ENCODE measurements at regions of chr20 and their contacts with region 1.

Region 1: GRCh38 chr20:44942264-44942973 is 17.8 kb downstream of the TOMM34 start:
- DNase-seq: no peak
- H3K4me3 ChIP-seq: no peak overlapping the region
- H3K27ac ChIP-seq: no peak overlapping the region
- H3K4me1 ChIP-seq: no peaks in the 10 kb centered on the region
- H3K27me3 ChIP-seq: no peaks in the 10 kb centered on the region
- CTCF ChIP-seq: peak; percentile 10 to 36 (median 31); a peak in 3 of 4 replicates
- EP300 ChIP-seq: no peak
- POLR2A ChIP-seq: no peak
- RAD21 ChIP-seq: no peak

Region 2: DNA sequence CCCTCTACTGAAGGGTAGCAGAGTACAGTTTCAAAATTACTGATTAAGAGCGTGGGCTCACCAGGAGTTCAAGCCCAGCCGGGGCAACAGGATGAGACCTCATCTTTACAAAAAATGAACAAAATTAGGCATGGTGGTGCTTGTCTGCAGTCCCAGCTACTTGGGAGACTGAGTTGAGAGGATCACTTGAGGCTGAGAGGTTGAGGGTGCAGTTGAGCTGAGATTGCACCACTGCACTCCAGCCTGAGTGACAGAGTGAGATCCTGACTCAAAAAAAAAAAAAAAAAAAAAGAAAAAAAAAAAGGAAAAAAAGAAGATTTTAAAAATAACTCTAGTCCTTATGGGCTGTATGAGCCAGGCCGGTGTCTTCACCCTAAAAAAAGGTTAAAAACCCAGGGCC is 13.8 kb before region 1 on chr20:
- CTCF ChIA-PET with region 1: interaction called, 8 read pairs
- POLR2A ChIA-PET with region 1: interaction called, 27 read pairs
- DNase-seq: no peak
- H3K4me3 ChIP-seq: no peak overlapping the region
- H3K27ac ChIP-seq: no peak overlapping the region
- H3K4me1 ChIP-seq: no peaks in the 10 kb centered on the region
- H3K27me3 ChIP-seq: no peaks in the 10 kb centered on the region
- CTCF ChIP-seq: no peak
- EP300 ChIP-seq: no peak
- POLR2A ChIP-seq: no peak
- RAD21 ChIP-seq: no peak

Region 3: DNA sequence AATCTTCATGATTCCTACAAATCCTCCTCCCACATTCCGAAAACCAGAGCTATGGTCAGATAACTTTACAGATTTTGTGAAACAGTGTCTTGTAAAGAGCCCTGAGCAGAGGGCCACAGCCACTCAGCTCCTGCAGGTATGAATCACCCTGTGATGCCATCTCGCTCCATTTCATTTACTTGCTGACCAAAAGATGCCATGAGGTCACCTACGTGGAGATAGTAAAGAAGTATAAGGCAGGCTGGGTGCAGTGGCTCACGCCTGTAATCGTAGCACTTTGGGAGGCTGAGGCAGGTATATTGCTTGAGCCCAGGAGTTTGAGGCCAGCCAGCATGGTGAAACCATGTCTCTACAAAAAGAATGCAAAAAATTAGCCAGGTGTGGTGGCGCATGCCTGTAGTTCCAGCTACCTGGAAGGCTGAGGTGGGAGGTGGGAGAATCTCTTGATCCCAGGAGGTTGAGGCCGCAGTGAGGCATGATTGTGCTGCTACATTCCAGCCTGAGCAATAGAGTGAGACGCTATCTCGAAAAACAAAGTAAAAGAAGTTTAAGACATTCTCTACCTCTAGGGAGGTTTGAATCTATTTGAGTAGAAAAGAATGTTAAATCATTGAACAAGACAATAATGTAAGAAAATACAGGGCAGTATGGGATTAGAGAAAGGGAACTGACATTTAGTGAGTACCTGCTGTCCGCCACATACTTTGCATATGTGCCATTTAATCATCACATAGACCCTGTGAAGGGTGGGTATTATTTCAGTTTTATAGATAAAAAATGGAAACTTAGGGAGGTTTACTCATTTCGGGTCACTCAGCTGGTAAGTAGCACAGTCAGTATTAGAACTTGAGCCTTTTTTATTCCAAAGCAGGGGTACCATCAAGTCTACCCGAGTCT is 55.0 kb after region 1 on chr20:
- CTCF ChIA-PET with region 1: no interaction called
- POLR2A ChIA-PET with region 1: no interaction called
- DNase-seq: no peak
- H3K4me3 ChIP-seq: no peak overlapping the region
- H3K27ac ChIP-seq: no peak overlapping the region
- H3K4me1 ChIP-seq: no peaks in the 10 kb centered on the region; a peak in 1 of 7 replicates
- H3K27me3 ChIP-seq: no peaks in the 10 kb centered on the region
- CTCF ChIP-seq: no peak
- EP300 ChIP-seq: no peak
- POLR2A ChIP-seq: no peak
- RAD21 ChIP-seq: no peak

Measured in H1 (cell line).